Heart right ventricle (tissue), 16 donors: ENCODE measurements at regions of chr9 and their contacts with region 1.

Region 1: GRCh38 chr9:29211580-29212396 is 1638.5 kb upstream of the C9orf72 start:
- DNase-seq: no peak
- ATAC-seq: peak in 6 of 8 donors; percentile 21 to 89 (median 56)
- H3K4me3 ChIP-seq: peak overlapping the region in 9 of 10 donors; percentile 12 to 34 (median 30)
- H3K27ac ChIP-seq: no peak overlapping the region
- H3K4me1 ChIP-seq: peaks cover 0 to 19% (median 11%) of the 10 kb centered on the region in 9 donors
- H3K27me3 ChIP-seq: peaks cover 8 to 65% (median 59%) of the 10 kb centered on the region in 7 donors
- CTCF ChIP-seq: peak in 8 of 9 donors; percentile 33 to 72 (median 54)

Region 2: DNA sequence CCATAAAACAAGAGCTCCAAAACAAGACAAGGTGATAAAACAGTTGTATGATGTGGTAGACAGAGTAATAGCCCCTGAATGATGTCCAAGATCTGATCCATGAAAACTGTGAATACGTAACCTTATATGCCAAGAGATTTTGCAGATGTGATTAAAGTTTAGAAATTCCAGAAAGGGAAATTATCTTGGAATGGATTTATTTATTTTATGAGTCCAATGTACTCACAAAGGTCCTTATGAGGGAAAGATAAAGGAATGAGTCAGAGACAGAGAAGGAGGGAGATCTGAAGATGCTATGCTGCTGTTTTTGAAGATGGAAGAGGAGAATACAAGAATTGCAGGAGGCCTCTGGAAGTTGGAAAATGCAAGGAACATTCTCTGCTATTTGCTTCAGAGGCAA is 137.3 kb after region 1 on chr9:
- intact Hi-C with region 1: no loop called
- DNase-seq: no peak
- ATAC-seq: no peak
- H3K4me3 ChIP-seq: no peak overlapping the region
- H3K27ac ChIP-seq: no peak overlapping the region
- H3K4me1 ChIP-seq: no peaks in the 10 kb centered on the region
- H3K27me3 ChIP-seq: no peaks in the 10 kb centered on the region
- CTCF ChIP-seq: no peak

Region 3: DNA sequence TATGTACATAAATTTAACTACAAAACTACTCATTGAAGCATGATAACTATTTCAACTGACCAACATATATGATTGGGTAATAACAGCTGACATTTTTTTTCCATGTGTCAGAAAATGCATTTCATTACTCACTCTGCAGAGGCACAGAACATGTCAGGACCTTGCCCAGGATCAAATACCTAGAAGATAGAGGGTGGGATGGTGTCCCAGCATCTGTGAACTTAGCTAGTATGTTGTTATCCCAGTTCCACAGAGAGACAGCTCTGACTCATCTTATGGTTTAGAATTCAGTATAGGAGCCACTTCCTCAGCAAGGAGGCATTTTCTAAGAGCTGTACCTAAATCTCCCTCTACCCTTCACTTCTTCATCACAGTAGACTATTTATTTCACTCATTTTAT is 1974.0 kb after region 1 on chr9:
- intact Hi-C with region 1: loop called in 1 of 10 experiments (anchors 5 kb)
- DNase-seq: no peak
- ATAC-seq: no peak
- H3K4me3 ChIP-seq: no peak overlapping the region
- H3K27ac ChIP-seq: no peak overlapping the region
- H3K4me1 ChIP-seq: no peaks in the 10 kb centered on the region
- H3K27me3 ChIP-seq: no peaks in the 10 kb centered on the region
- CTCF ChIP-seq: no peak